ENCODE measurements at regions of chr22 and their contacts with region 1.

Region 1: DNA sequence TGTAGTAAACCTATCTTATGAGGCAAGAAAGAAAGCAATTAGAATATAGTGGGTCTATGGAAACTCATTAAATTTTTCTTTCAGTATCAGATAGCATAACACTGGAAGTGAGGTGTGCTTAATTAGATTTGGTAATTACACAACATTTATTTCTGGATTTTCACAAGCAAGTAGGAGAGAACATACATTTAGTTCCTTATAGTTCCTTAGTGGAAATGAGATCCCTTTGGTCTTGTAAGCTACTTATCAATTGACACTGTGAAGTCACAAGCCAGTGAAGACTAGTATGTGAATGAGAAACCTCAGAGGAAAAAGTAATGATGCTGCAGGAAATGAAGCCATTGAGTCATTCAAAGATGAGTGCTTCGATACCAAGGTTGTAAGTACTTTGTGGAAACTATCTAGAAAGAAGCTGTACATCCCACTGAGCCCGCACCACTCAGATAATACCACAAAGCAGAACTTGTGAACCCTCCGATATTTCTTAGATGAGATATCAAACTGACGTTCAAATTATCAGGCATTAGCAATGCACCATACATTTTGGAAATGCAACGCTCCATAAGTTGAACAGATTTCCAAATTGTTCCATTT is 53.5 kb downstream of the ENTHD1 start:
- DNase-seq: no peak
- ATAC-seq: peak; percentile 49
- H3K4me3 ChIP-seq: peak overlapping the region in 1 of 5 experiments; percentile 40
- H3K4me3 Mint-ChIP-seq: peak overlapping the region; percentile 54
- H3K27ac ChIP-seq: peak overlapping the region in 1 of 2 donors; percentile 10
- H3K27ac Mint-ChIP-seq: peak overlapping the region; percentile 57
- H3K4me1 ChIP-seq: peaks cover 28 to 42% of the 10 kb centered on the region in 2 donors
- H3K4me1 Mint-ChIP-seq: peaks cover 46% of the 10 kb centered on the region
- H3K27me3 ChIP-seq: no peaks in the 10 kb centered on the region
- H3K27me3 Mint-ChIP-seq: no peaks in the 10 kb centered on the region
- CTCF ChIP-seq: no peak

Region 2: DNA sequence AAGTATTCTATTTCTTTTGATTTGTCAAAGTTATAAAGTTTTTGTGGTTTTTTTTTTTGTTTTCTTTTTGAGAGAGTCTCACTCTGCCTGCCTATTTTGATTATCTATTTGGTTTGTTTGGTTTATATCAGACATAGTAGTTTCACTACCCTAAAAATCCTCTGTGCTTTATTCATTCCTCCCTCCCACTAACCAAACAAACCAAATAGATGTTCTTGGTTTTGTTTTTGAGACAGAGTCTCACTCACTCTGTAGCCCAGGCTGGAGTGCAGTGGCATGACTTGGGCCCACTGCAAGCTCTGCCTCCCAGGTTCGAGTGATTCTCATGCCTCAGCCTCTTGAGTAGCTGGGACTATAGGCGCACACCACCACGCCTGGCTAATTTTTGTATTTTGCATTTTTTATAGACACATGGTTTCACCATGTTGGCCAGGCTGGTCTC is 14.3 kb before region 1 on chr22:
- CTCF ChIA-PET with region 1: no interaction called
- POLR2A ChIA-PET with region 1: interaction called, 4 read pairs
- intact Hi-C with region 1: loop called (anchors 1 kb)
- DNase-seq: peak; percentile 72
- ATAC-seq: peak; percentile 96
- H3K4me3 ChIP-seq: peak overlapping the region in 4 of 5 experiments; percentile 24 to 55 (median 44)
- H3K4me3 Mint-ChIP-seq: peak overlapping the region; percentile 83
- H3K27ac ChIP-seq: peak overlapping the region; percentile 50 to 77
- H3K27ac Mint-ChIP-seq: peak overlapping the region; percentile 91
- H3K4me1 ChIP-seq: peaks cover 17 to 36% of the 10 kb centered on the region in 2 donors
- H3K4me1 Mint-ChIP-seq: peaks cover 45% of the 10 kb centered on the region
- H3K27me3 ChIP-seq: no peaks in the 10 kb centered on the region
- H3K27me3 Mint-ChIP-seq: no peaks in the 10 kb centered on the region
- CTCF ChIP-seq: no peak

Region 3: DNA sequence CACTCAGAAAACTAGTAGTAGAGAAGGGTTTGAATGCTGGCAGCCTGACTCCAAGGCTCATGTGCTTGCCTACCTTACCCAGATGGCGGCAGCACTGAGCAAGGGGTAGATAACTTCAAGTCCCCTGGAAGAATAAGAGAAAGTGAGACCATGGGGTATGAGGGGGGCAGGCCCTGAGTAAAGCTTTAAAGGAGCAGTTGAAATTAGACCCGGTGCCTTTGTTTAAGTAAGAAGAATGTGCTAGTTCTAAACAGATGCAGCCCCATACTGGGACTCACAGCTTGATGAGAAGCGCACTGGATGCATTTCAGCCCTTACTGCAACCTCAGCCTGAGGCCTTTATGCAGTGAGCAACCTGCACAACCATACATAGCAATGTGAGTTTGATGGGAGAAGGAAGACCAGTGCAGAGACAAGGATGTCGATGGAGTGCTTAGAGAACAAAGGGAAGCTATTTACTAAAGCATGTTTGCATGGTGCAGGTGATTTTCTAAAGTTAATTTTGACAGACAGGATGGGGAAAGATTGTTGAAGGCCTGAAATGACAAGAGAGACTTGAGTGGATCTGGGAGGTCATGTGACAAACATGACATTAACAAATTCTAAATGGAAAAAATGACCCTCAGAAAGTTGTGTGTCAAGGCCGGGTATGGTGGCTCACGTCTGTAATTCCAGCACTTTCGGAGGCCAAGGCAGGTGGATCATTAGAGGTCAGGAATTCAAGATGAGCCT is 93.1 kb after region 1 on chr22:
- CTCF ChIA-PET with region 1: no interaction called
- POLR2A ChIA-PET with region 1: no interaction called
- intact Hi-C with region 1: loop called (anchors 10 kb)
- DNase-seq: peak; percentile 43
- ATAC-seq: no peak
- H3K4me3 ChIP-seq: no peak overlapping the region
- H3K4me3 Mint-ChIP-seq: peak overlapping the region; percentile 67
- H3K27ac ChIP-seq: peak overlapping the region in 1 of 2 donors; percentile 69
- H3K27ac Mint-ChIP-seq: peak overlapping the region; percentile 83
- H3K4me1 ChIP-seq: peaks cover 68 to 77% of the 10 kb centered on the region in 2 donors
- H3K4me1 Mint-ChIP-seq: peaks cover 56% of the 10 kb centered on the region
- H3K27me3 ChIP-seq: no peaks in the 10 kb centered on the region
- H3K27me3 Mint-ChIP-seq: no peaks in the 10 kb centered on the region
- CTCF ChIP-seq: peak; percentile 55